GM10248 (cell line): ENCODE measurements at regions of chr1 and their contacts with region 1.

Region 1: DNA sequence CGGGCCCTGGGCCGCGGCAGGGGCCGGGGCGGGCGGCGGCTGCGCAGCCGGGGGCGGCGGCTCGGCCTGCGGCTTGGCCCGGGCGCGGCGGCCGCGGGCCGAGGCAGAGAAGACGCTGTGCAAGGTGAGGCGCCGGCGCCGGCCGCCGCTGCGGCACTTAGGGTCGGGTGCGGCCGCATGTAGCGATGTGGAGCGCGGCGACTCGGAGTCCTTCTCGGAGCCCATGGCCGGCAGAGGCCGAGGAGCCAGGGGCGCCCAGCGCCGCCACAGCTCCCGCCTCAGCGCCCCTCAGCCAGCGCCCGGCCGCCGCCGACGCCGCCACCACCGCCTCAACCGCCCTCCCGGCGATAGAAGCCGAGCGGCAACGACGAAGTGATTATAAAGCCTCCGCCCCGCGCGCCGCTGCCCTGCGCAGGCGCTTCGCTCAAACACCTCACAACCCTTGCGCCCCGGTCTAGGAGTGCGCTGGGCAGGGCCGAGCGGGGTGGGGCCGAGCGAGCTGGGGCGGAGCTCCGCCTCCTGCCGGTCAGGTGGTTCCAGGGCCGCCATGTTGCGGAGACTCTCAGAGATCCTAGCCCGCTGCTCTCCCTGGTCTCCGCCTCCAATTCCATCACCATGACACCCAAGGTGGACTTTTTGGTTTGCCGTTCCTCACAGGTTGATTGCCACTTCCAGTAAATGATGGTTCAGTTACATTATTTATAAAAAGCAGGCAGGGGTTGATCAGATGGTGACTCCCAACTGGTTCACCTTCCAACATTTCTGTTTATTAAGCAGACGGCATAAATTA is at the start of gene RNF19B:
- DNase-seq: peak; percentile 97
- CTCF ChIP-seq: no peak

Region 2: DNA sequence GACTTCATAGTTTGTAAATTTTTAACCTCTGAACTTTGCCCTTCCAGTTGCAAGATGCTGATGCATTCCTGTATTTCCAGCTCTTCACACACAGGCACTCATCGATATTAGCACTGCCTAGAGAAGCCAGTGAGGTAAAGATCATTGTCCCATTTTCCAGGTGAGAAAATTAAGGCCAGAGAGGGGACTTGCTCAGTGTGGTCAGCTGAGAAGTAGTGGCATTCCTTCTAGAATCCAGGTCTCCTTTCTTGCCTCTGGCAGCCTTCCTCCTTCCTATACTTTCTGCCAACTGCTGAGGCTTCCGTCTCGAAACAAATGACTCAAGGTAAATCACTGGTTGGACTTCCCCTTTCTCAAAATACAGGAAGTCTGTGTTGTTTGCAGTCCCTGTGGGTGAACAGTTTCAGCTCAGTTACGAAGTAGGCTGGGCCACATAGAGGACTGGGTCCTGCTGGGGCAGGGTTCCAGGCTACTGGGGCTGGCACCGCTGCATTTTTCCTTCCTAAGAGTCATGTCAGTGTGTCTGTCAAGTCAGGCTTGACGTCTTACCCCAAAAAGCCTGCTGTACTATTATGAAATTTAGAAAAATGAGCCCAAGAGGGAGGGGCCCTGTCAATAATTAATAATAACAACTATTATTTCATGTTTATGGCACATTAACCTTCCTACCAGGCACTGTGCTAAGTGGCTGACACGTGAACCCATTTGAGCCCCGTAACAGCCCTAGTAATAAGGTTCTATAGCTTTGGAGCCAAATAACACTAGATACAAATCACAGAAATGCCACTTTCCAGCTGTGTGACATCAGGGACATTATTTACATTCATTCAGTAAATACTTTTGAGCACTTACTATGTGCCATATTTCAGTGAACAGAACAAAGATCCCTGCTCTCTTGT is 16.6 kb after region 1 on chr1:
- CTCF ChIA-PET with region 1: interaction called, 8 read pairs
- POLR2A ChIA-PET with region 1: interaction called, 14 read pairs
- DNase-seq: peak; percentile 85
- CTCF ChIP-seq: no peak

Region 3: GRCh38 chr1:32998064-32998463 is 33.4 kb after region 1 on chr1:
- CTCF ChIA-PET with region 1: interaction called, 5 read pairs
- POLR2A ChIA-PET with region 1: interaction called, 22 read pairs
- DNase-seq: no peak
- CTCF ChIP-seq: no peak